Activated CD4-positive, alpha-beta T cell treated with anti-CD3 and anti-CD28 coated beads for 36 hours (primary cell): ENCODE measurements at regions of chr4 and their contacts with region 1.

Region 1: GRCh38 chr4:98851806-98852205 is 77.1 kb downstream of the EIF4E start:
- DNase-seq: no peak
- ATAC-seq: no peak
- H3K4me3 Mint-ChIP-seq: no peak overlapping the region
- H3K27ac Mint-ChIP-seq: no peak overlapping the region
- H3K4me1 Mint-ChIP-seq: no peaks in the 10 kb centered on the region
- H3K27me3 Mint-ChIP-seq: peaks cover 5% of the 10 kb centered on the region

Region 2: DNA sequence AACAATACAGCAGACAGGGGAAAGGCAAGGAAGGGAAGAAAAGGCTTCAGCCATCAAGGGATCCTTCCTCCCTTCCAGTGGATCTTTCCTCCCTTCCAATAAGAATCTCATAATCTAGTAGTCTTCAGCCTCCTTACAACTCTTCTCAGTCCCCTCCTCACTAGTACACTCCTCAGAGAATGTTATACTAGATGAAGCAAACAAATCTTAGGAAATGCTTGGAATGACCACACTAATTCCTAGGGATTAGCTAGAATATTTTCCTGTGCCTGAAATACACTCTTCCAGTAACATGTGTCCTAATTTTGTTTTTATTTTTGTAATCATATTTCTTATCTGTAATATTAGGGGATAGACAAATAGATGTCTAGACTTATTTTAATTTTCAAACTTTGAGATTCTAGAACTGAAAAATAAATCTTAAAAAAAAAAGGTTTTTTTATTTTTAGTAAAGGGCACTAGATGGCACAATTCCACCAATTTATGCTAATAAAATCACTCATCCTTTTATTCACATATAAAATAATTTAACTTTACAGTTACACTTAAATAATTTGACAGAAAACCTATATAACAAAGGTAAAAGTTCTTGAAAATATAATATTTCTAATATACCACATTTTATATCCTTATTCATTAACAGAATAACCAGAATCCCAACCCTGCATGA is 701.6 kb before region 1 on chr4:
- CTCF ChIA-PET with region 1: no interaction called
- POLR2A ChIA-PET with region 1: no interaction called
- intact Hi-C with region 1: loop called in 1 of 2 experiments (anchors 5 kb)
- DNase-seq: no peak
- ATAC-seq: no peak
- H3K4me3 Mint-ChIP-seq: no peak overlapping the region
- H3K27ac Mint-ChIP-seq: no peak overlapping the region
- H3K4me1 Mint-ChIP-seq: peaks cover 6% of the 10 kb centered on the region
- H3K27me3 Mint-ChIP-seq: peaks cover 2% of the 10 kb centered on the region

Region 3: DNA sequence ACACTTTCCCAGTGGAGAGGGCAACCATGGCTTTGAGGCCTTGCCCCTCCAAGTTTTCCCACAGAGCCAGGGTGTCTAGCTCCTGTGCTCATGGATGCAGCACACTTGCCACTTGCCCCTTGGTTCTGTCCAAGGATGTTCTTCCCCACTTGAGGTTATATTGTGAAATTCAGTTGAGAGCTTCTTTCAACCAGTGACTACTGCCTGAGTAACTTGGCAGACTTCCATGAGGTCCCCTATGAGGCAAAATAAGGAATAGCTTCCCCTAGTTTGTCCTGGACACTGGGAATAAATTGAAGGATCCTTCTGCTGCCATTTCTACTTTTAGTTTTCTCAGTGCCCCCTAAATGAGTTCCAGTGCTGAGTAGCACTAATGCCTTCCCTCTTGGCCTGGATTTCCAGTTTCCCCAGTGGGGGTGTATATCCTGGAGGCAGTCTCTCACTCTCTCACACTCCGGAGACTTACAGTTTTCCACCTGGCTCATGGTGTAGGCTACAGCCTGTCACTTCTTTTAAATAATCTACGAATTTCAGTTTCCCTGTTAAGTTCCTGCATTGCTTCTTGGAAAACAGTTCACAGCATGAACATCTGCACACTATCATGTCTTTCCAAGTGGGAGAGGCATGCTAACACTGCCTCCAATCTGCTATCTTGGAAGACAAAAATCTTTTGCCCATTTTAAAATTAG is 328.7 kb after region 1 on chr4:
- CTCF ChIA-PET with region 1: no interaction called
- POLR2A ChIA-PET with region 1: no interaction called
- intact Hi-C with region 1: no loop called
- DNase-seq: no peak
- ATAC-seq: no peak
- H3K4me3 Mint-ChIP-seq: no peak overlapping the region
- H3K27ac Mint-ChIP-seq: no peak overlapping the region
- H3K4me1 Mint-ChIP-seq: no peaks in the 10 kb centered on the region
- H3K27me3 Mint-ChIP-seq: peaks cover 2% of the 10 kb centered on the region